Activated naive CD4-positive, alpha-beta T cell treated with anti-CD3 and anti-CD28 coated beads for 36 hours (primary cell): ENCODE measurements at regions of chr17 and their contacts with region 1.

Region 1: DNA sequence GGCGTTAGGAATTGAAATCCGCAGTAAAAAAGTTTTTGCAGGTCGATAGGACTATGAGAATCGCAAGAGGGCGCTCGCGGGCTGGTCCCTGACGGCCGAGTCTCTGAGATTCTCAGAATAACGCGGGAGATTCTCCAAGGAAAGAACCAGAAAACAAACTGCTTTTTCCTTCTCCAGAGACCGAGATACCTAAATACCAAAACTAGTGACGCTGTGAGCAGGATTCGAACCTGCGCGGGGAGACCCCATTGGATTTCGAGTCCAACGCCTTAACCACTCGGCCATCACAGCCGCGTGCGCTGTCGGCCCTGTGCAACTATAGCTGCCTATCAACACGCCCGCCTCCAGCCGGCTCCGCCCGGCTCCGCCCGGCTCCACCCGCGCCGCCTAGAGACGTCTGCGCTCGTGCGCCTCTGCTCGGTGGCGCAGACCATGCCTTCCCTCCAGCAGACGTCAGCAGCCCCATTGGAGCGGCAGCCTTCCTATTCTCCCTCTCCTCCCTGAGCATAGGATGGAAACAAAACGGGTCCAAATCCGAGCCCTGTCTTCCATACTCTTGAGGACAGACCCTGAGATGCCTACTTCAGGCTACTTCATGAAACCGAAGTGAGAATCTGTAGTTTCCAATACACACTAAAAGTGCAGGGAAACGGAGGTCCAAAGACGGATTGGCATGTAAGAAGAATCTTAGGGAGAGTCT is 13.4 kb downstream of the PER1 start:
- DNase-seq: peak; percentile 98
- H3K4me3 Mint-ChIP-seq: no peak overlapping the region
- H3K27ac Mint-ChIP-seq: no peak overlapping the region
- H3K4me1 Mint-ChIP-seq: peaks cover 13% of the 10 kb centered on the region
- H3K27me3 Mint-ChIP-seq: no peaks in the 10 kb centered on the region

Region 2: GRCh38 chr17:8125157-8125946 is 13.5 kb before region 1 on chr17:
- CTCF ChIA-PET with region 1: interaction called, 29 read pairs
- intact Hi-C with region 1: loop called (anchors 1 kb)
- DNase-seq: peak; percentile 96
- H3K4me3 Mint-ChIP-seq: peak overlapping the region; percentile 84
- H3K27ac Mint-ChIP-seq: peak overlapping the region; percentile 90
- H3K4me1 Mint-ChIP-seq: peaks cover 43% of the 10 kb centered on the region
- H3K27me3 Mint-ChIP-seq: peaks cover 29% of the 10 kb centered on the region

Region 3: GRCh38 chr17:8151123-8151640 is 12.4 kb after region 1 on chr17:
- CTCF ChIA-PET with region 1: interaction called, 48 read pairs
- intact Hi-C with region 1: loop called (anchors 1 kb)
- DNase-seq: peak; percentile 86
- H3K4me3 Mint-ChIP-seq: peak overlapping the region; percentile 84
- H3K27ac Mint-ChIP-seq: peak overlapping the region; percentile 84
- H3K4me1 Mint-ChIP-seq: peaks cover 43% of the 10 kb centered on the region
- H3K27me3 Mint-ChIP-seq: no peaks in the 10 kb centered on the region

Region 4: GRCh38 chr17:8173056-8173870 is 34.4 kb after region 1 on chr17:
- CTCF ChIA-PET with region 1: interaction called, 3 read pairs
- intact Hi-C with region 1: loop called (anchors 1 kb)
- DNase-seq: peak; percentile 90
- H3K4me3 Mint-ChIP-seq: peak overlapping the region; percentile 69
- H3K27ac Mint-ChIP-seq: peak overlapping the region; percentile 100
- H3K4me1 Mint-ChIP-seq: peaks cover 40% of the 10 kb centered on the region
- H3K27me3 Mint-ChIP-seq: peaks cover 4% of the 10 kb centered on the region

Region 5: GRCh38 chr17:8435245-8436168 is 296.7 kb after region 1 on chr17 and contains the start of gene NDEL1:
- CTCF ChIA-PET with region 1: no interaction called
- intact Hi-C with region 1: loop called (anchors 5 kb)
- DNase-seq: peak; percentile 99
- H3K4me3 Mint-ChIP-seq: peak within 1 kb of the TSS; percentile 96
- H3K27ac Mint-ChIP-seq: peak within 1 kb of the TSS; percentile 93
- H3K4me1 Mint-ChIP-seq: peaks cover 32% of the 10 kb centered on the region
- H3K27me3 Mint-ChIP-seq: no peaks in the 10 kb centered on the region
- total RNA-seq, gene NDEL1: 43.1 to 47.1 TPM